Common myeloid progenitor, CD34-positive (primary cell): ENCODE measurements at regions of chr1 and their contacts with region 1.

Region 1: GRCh38 chr1:226186124-226187018 is at the start of gene ACBD3:
- DNase-seq: peak; percentile 86 to 93 (median 90)
- H3K4me3 ChIP-seq: peak within 1 kb of the TSS; percentile 41 to 95 (median 93)
- H3K27ac ChIP-seq: peak within 1 kb of the TSS; percentile 68 to 87
- H3K4me1 ChIP-seq: peaks cover 17 to 37% (median 30%) of the 10 kb centered on the region in 4 experiments
- H3K27me3 ChIP-seq: no peaks in the 10 kb centered on the region

Region 2: GRCh38 chr1:226074046-226074445 is 112.3 kb before region 1 on chr1:
- CTCF ChIA-PET with region 1: no interaction called
- POLR2A ChIA-PET with region 1: no interaction called
- DNase-seq: no peak
- H3K4me3 ChIP-seq: no peak overlapping the region
- H3K27ac ChIP-seq: no peak overlapping the region
- H3K4me1 ChIP-seq: peaks cover 0 to 7% (median under 1%) of the 10 kb centered on the region in 4 experiments
- H3K27me3 ChIP-seq: no peaks in the 10 kb centered on the region

Region 3: DNA sequence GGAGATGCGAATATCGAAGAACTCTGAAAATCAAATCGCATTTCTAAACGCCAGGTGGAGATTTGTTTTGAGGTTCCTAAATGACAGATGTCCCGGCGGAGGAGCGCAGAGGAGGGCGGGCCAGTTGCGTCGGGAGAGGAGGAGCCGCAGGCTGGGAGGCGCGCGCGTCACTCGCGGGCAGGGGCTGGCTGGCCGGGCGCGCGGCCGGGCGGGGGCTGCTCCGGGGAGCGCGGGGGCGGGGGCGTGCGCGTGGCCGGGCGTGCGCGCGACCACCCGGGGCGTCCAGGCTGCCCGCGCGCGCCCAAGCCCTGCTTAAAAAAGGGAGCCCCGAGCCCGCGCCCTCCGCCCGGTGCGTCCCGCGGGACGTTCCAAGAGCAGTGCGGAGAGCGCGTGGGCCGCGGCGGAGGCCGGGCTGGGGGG is 76.5 kb before region 1 on chr1:
- CTCF ChIA-PET with region 1: no interaction called
- POLR2A ChIA-PET with region 1: no interaction called
- DNase-seq: peak; percentile 85 to 94 (median 92)
- H3K4me3 ChIP-seq: peak overlapping the region; percentile 65 to 87 (median 69)
- H3K27ac ChIP-seq: peak overlapping the region; percentile 54 to 81
- H3K4me1 ChIP-seq: peaks cover 2 to 24% (median 20%) of the 10 kb centered on the region in 4 experiments
- H3K27me3 ChIP-seq: no peaks in the 10 kb centered on the region

Region 4: GRCh38 chr1:226162898-226163297 is 23.5 kb before region 1 on chr1:
- CTCF ChIA-PET with region 1: interaction called, 38 read pairs
- POLR2A ChIA-PET with region 1: no interaction called
- DNase-seq: no peak
- H3K4me3 ChIP-seq: no peak overlapping the region
- H3K27ac ChIP-seq: no peak overlapping the region
- H3K4me1 ChIP-seq: no peaks in the 10 kb centered on the region
- H3K27me3 ChIP-seq: no peaks in the 10 kb centered on the region

Region 5: DNA sequence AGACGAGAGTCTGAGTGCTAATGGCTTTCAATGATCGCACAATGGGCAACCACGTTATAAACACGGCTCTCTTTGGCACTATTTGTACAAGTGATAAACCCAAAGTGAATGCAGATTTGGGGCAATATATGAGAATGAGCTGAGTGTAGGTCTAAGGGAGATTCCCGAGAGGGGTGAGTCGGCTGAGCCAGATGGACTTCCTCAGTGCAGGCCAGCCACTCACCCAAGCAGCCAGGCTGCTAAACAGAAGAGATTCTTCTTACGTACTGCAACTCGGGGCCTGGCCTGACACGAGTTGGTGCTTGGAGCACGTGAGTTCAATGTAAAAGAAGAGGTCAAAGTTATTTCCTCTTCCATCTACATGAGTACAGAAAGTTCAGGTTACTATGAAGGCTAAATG is 30.9 kb after region 1 on chr1:
- CTCF ChIA-PET with region 1: no interaction called
- POLR2A ChIA-PET with region 1: no interaction called
- DNase-seq: no peak
- H3K4me3 ChIP-seq: no peak overlapping the region
- H3K27ac ChIP-seq: no peak overlapping the region
- H3K4me1 ChIP-seq: no peaks in the 10 kb centered on the region
- H3K27me3 ChIP-seq: no peaks in the 10 kb centered on the region

Region 6: GRCh38 chr1:226337276-226337875 is 151.0 kb after region 1 on chr1:
- CTCF ChIA-PET with region 1: no interaction called
- POLR2A ChIA-PET with region 1: no interaction called
- DNase-seq: no peak
- H3K4me3 ChIP-seq: no peak overlapping the region
- H3K27ac ChIP-seq: no peak overlapping the region
- H3K4me1 ChIP-seq: peaks cover 0 to 10% (median 4%) of the 10 kb centered on the region in 4 experiments
- H3K27me3 ChIP-seq: no peaks in the 10 kb centered on the region